B cell (primary cell): ENCODE measurements at regions of chr1 and their contacts with region 1.

Region 1: DNA sequence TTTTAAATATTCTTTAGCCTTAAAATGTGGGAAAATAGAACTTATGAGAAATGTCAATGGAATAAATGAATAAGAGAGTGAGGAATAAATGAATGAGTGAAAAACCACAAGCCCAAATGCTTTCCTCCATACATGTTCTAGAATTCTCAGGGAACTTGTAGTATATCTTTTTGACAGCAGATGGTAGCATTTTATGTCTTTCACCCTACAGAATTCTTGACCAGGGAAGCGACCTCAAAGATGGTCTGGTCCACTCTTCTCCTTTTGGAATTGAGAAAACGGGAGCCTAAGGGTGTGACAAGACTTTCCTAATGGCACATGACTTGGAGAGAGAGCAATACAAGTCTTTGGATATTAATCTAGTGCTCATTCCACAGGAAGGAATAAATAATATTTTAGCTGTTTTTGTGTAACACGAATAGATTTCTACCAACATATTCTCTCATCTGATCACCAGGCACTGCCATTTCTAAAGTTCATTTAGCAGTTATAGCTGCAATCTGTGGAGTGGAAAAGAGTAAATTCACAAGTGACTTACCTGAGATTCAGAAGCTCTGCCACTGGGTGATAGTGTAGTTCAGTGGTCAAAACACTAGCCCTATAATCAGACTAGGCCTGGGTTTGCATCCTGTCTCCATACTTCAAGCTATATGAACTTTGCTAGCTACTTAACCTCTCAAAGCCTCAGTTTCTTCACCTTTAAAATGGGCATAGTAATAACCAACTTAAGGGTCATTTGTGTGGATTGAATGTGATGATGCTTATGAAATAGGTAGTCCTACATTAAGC is 15.0 kb upstream of the F5 start:
- DNase-seq: peak; percentile 61
- ATAC-seq: no peak
- H3K4me3 ChIP-seq: no peak overlapping the region
- H3K4me3 Mint-ChIP-seq: peak overlapping the region; percentile 20
- H3K27ac ChIP-seq: peak overlapping the region in 1 of 2 donors; percentile 62
- H3K27ac Mint-ChIP-seq: peak overlapping the region; percentile 77
- H3K4me1 ChIP-seq: peaks cover 39 to 40% of the 10 kb centered on the region in 2 donors
- H3K4me1 Mint-ChIP-seq: peaks cover 42% of the 10 kb centered on the region
- H3K27me3 ChIP-seq: no peaks in the 10 kb centered on the region
- H3K27me3 Mint-ChIP-seq: no peaks in the 10 kb centered on the region
- CTCF ChIP-seq: peak; percentile 70

Region 2: DNA sequence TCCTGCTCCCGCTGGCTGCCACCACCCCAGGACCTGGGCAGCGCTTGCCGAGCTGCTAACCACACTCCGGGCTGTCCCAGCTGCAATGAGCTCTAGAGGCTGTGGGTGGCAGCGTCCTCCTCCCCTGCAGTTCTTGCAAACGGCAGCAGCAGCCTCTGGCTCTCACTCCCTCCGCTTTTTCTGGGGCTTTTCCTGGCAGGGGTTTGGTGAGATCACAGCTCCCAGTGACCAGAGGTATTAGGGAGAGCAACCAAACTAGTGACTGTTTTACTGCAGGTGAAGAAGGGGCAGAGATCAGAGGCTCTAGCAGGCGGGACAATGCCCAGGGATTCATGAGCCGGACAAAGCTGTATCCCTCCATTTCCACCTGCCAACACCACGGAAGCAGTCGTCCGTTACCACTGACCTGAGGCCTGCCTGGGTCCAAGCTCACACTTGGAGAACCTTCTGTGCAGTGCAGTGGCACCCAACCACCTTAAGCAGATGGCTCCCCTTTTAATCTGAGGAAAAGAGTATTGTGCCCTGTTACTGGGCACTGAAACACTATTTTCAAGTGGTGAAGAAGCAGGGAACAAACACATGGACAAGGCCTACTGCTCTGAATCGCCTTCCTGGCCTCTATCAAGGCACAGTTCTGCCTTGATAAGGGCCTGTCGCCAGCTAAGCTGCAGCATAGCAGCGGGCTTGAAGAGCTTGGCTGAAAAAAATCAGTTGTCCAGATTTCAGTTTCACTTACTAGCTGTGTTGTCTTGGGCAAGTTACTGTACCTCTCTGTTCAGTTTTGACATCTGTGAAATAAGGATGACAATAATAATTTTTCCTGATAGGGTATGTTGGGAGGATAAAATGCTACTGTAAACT is 14.7 kb before region 1 on chr1 and contains the start of gene F5:
- CTCF ChIA-PET with region 1: interaction called, 50 read pairs
- POLR2A ChIA-PET with region 1: no interaction called
- intact Hi-C with region 1: no loop called
- DNase-seq: peak; percentile 75
- ATAC-seq: peak; percentile 93
- H3K4me3 ChIP-seq: peak within 1 kb of the TSS in 3 of 5 experiments; percentile 8 to 22 (median 13)
- H3K4me3 Mint-ChIP-seq: peak within 1 kb of the TSS; percentile 69
- H3K27ac ChIP-seq: no peak within 1 kb of the TSS
- H3K27ac Mint-ChIP-seq: no peak within 1 kb of the TSS
- H3K4me1 ChIP-seq: peaks cover 7 to 9% of the 10 kb centered on the region in 2 donors
- H3K4me1 Mint-ChIP-seq: peaks cover 7% of the 10 kb centered on the region
- H3K27me3 ChIP-seq: peaks cover 0 to 13% (median 9%) of the 10 kb centered on the region in 4 experiments
- H3K27me3 Mint-ChIP-seq: peaks cover 26% of the 10 kb centered on the region
- CTCF ChIP-seq: peak; percentile 73
- total RNA-seq, gene F5: 0.15 and 0.27 TPM in 2 replicates

Region 3: GRCh38 chr1:169624912-169625311 is 23.6 kb after region 1 on chr1:
- CTCF ChIA-PET with region 1: interaction called, 11 read pairs
- POLR2A ChIA-PET with region 1: no interaction called
- intact Hi-C with region 1: no loop called
- DNase-seq: no peak
- ATAC-seq: no peak
- H3K4me3 ChIP-seq: no peak overlapping the region
- H3K4me3 Mint-ChIP-seq: no peak overlapping the region
- H3K27ac ChIP-seq: no peak overlapping the region
- H3K27ac Mint-ChIP-seq: no peak overlapping the region
- H3K4me1 ChIP-seq: no peaks in the 10 kb centered on the region
- H3K4me1 Mint-ChIP-seq: peaks cover 7% of the 10 kb centered on the region
- H3K27me3 ChIP-seq: no peaks in the 10 kb centered on the region
- H3K27me3 Mint-ChIP-seq: no peaks in the 10 kb centered on the region
- CTCF ChIP-seq: no peak

Region 4: DNA sequence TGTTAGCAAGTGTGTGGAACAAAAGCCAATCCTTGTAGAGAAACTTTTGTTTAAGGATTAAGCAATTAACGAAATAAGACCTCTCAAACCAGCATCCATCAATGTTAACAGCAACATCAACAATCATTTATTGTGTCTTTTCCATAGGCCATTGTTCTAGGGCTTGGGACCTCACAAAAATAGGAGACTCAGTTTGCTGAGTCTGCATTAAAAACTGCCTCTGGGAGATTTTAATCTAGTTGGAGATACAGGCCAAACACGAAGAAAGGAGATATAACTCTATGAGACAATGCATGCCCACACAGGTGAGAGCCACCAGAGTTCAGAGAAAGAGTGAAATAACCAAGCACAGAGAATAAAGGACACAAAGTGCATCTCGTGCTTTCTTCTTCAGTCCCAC is 43.0 kb after region 1 on chr1:
- CTCF ChIA-PET with region 1: interaction called, 12 read pairs
- POLR2A ChIA-PET with region 1: no interaction called
- intact Hi-C with region 1: no loop called
- DNase-seq: no peak
- ATAC-seq: no peak
- H3K4me3 ChIP-seq: no peak overlapping the region
- H3K4me3 Mint-ChIP-seq: no peak overlapping the region
- H3K27ac ChIP-seq: no peak overlapping the region
- H3K27ac Mint-ChIP-seq: no peak overlapping the region
- H3K4me1 ChIP-seq: peaks cover 13 to 18% of the 10 kb centered on the region in 2 donors
- H3K4me1 Mint-ChIP-seq: peaks cover 27% of the 10 kb centered on the region
- H3K27me3 ChIP-seq: no peaks in the 10 kb centered on the region
- H3K27me3 Mint-ChIP-seq: no peaks in the 10 kb centered on the region
- CTCF ChIP-seq: no peak

Region 5: GRCh38 chr1:169680377-169681019 is 79.2 kb after region 1 on chr1:
- CTCF ChIA-PET with region 1: interaction called, 80 read pairs
- POLR2A ChIA-PET with region 1: interaction called, 3 read pairs
- intact Hi-C with region 1: no loop called
- DNase-seq: peak; percentile 70
- ATAC-seq: peak; percentile 84
- H3K4me3 ChIP-seq: peak overlapping the region in 2 of 5 experiments; percentile 6 to 16
- H3K4me3 Mint-ChIP-seq: peak overlapping the region; percentile 75
- H3K27ac ChIP-seq: peak overlapping the region; percentile 88 to 92
- H3K27ac Mint-ChIP-seq: peak overlapping the region; percentile 95
- H3K4me1 ChIP-seq: peaks cover 84 to 96% of the 10 kb centered on the region in 2 donors
- H3K4me1 Mint-ChIP-seq: peaks cover 61% of the 10 kb centered on the region
- H3K27me3 ChIP-seq: no peaks in the 10 kb centered on the region
- H3K27me3 Mint-ChIP-seq: no peaks in the 10 kb centered on the region
- CTCF ChIP-seq: no peak

Region 6: DNA sequence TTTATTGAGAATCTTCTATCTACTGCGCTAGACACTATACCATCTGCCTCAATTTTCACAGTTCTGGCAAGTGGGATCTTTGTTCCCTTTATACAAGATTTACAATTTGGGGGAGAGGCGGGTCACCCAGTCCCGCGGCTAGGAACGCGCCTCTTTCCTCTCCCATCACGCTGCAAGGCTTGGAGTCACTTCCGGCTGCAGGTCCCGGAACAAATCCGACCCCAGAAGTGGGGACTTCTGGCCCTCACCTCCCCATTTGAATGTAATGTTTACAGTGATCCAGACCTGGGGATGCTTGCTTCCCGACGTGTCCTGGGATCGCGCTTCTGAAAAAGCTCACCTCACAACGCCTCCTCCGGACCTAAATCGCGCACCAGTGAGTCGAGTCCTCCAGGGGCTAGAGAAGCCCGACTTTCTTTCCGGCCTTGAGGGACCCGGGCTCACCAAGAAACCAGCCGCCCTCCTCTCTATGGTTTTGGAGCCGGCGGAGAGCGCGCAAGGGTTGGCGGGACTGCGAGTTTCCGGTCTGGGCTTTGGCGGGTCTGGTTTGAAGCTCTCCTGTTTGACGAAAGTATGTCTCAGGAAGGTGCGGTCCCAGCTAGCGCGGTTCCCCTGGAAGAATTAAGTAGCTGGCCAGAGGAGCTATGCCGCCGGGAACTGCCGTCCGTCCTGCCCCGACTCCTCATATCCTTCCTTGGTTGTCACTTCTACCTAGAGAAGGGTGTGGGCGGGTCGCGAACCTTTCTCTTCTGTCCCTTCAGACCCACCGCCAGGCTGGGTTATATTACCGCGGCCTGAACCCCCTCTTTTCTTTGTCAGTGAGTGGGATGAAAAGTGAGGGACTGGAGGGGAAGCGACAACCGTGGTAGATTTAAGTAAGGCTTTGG is 193.5 kb after region 1 on chr1 and contains the start of gene METTL18:
- CTCF ChIA-PET with region 1: interaction called, 15 read pairs
- POLR2A ChIA-PET with region 1: no interaction called
- intact Hi-C with region 1: loop called (anchors 5 kb)
- DNase-seq: peak; percentile 96
- ATAC-seq: peak; percentile 99
- H3K4me3 ChIP-seq: peak within 1 kb of the TSS; percentile 70 to 99 (median 94)
- H3K4me3 Mint-ChIP-seq: peak within 1 kb of the TSS; percentile 96
- H3K27ac ChIP-seq: peak within 1 kb of the TSS; percentile 72 to 91
- H3K27ac Mint-ChIP-seq: peak within 1 kb of the TSS; percentile 96
- H3K4me1 ChIP-seq: peaks cover 15 to 16% of the 10 kb centered on the region in 2 donors
- H3K4me1 Mint-ChIP-seq: peaks cover 45% of the 10 kb centered on the region
- H3K27me3 ChIP-seq: no peaks in the 10 kb centered on the region
- H3K27me3 Mint-ChIP-seq: no peaks in the 10 kb centered on the region
- CTCF ChIP-seq: no peak
- total RNA-seq, gene METTL18: 16.9 and 18.9 TPM in 2 replicates

Region 7: GRCh38 chr1:169809370-169810095 is 208.2 kb after region 1 on chr1:
- CTCF ChIA-PET with region 1: interaction called, 49 read pairs
- POLR2A ChIA-PET with region 1: no interaction called
- intact Hi-C with region 1: loop called (anchors 1 kb)
- DNase-seq: peak; percentile 62
- ATAC-seq: no peak
- H3K4me3 ChIP-seq: no peak overlapping the region
- H3K4me3 Mint-ChIP-seq: no peak overlapping the region
- H3K27ac ChIP-seq: no peak overlapping the region
- H3K27ac Mint-ChIP-seq: no peak overlapping the region
- H3K4me1 ChIP-seq: no peaks in the 10 kb centered on the region
- H3K4me1 Mint-ChIP-seq: no peaks in the 10 kb centered on the region
- H3K27me3 ChIP-seq: no peaks in the 10 kb centered on the region
- H3K27me3 Mint-ChIP-seq: no peaks in the 10 kb centered on the region
- CTCF ChIP-seq: peak; percentile 81